Breast epithelium (tissue), 4 donors: ENCODE measurements at regions of chr17 and their contacts with region 1.

Region 1: GRCh38 chr17:301681-302298 is 50.8 kb downstream of the RPH3AL start:
- DNase-seq: no peak
- H3K4me3 ChIP-seq: no peak overlapping the region
- H3K27ac ChIP-seq: peak overlapping the region in 1 of 2 donors; percentile 30
- H3K4me1 ChIP-seq: no peaks in the 10 kb centered on the region
- H3K27me3 ChIP-seq: no peaks in the 10 kb centered on the region
- CTCF ChIP-seq: no peak
- POLR2A ChIP-seq: no peak

Region 2: DNA sequence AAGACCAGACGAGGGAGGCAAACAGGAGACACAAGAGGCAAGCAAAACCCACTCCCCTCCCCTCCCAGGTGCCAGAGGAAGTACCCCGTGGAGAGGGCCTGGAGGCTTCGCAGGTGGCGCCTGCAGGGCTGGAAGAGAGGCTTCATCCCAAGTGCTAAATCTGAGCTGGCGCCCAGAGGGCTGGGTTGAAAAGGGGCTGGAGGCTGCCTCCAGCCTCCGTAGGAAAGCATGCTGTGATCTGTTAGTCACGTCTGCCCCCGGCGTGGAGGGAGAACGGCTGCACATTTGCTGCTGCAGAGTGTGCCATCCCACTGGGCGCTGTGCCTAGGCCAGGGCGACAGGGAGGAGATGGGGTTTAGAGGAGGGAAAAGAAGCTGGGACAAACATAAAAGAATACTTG is 33.9 kb after region 1 on chr17:
- intact Hi-C with region 1: loop called (anchors 1 kb)
- DNase-seq: no peak
- H3K4me3 ChIP-seq: peak overlapping the region in 1 of 3 donors; percentile 37
- H3K27ac ChIP-seq: peak overlapping the region in 1 of 2 donors; percentile 75
- H3K4me1 ChIP-seq: no peaks in the 10 kb centered on the region
- H3K27me3 ChIP-seq: no peaks in the 10 kb centered on the region
- CTCF ChIP-seq: no peak
- POLR2A ChIP-seq: no peak